Activated T-helper 2 cell treated with anti-CD3 and anti-CD28 coated beads, Interferon-gamma antibody, Interleukin-2, Interleukin-4, amounts not matched to agents 10 μg/mL and 5 μg/mL and 100 μg/mL, durations not matched to agents 14 hours and 24 hours and 36 hours (primary cell): ENCODE measurements at regions of chr1 and their contacts with region 1.

Region 1: GRCh38 chr1:53326088-53326597 is 1.7 kb downstream of the LRP8 start:
- DNase-seq: peak; percentile 94
- H3K4me3 Mint-ChIP-seq: peak overlapping the region; percentile 96
- H3K27ac Mint-ChIP-seq: peak overlapping the region; percentile 93
- H3K4me1 Mint-ChIP-seq: peaks cover 30% of the 10 kb centered on the region
- H3K27me3 Mint-ChIP-seq: no peaks in the 10 kb centered on the region

Region 2: GRCh38 chr1:53238197-53239155 is 87.7 kb before region 1 on chr1 and contains the start of gene MAGOH:
- intact Hi-C with region 1: loop called (anchors 2 kb)
- DNase-seq: peak; percentile 94
- H3K4me3 Mint-ChIP-seq: peak within 1 kb of the TSS; percentile 97
- H3K27ac Mint-ChIP-seq: peak within 1 kb of the TSS; percentile 93
- H3K4me1 Mint-ChIP-seq: peaks cover 19% of the 10 kb centered on the region
- H3K27me3 Mint-ChIP-seq: no peaks in the 10 kb centered on the region
- total RNA-seq, gene MAGOH: 89.0 and 90.2 TPM in 2 replicates

Region 3: GRCh38 chr1:53294567-53294966 is 31.6 kb before region 1 on chr1:
- intact Hi-C with region 1: loop called (anchors 2 kb)
- DNase-seq: peak; percentile 16
- H3K4me3 Mint-ChIP-seq: no peak overlapping the region
- H3K27ac Mint-ChIP-seq: peak overlapping the region; percentile 43
- H3K4me1 Mint-ChIP-seq: peaks cover 42% of the 10 kb centered on the region
- H3K27me3 Mint-ChIP-seq: no peaks in the 10 kb centered on the region

Region 4: GRCh38 chr1:53413175-53414001 is 87.2 kb after region 1 on chr1:
- intact Hi-C with region 1: loop called (anchors 1 kb)
- DNase-seq: peak; percentile 69
- H3K4me3 Mint-ChIP-seq: peak overlapping the region; percentile 64
- H3K27ac Mint-ChIP-seq: peak overlapping the region; percentile 96
- H3K4me1 Mint-ChIP-seq: peaks cover 75% of the 10 kb centered on the region
- H3K27me3 Mint-ChIP-seq: no peaks in the 10 kb centered on the region

Region 5: DNA sequence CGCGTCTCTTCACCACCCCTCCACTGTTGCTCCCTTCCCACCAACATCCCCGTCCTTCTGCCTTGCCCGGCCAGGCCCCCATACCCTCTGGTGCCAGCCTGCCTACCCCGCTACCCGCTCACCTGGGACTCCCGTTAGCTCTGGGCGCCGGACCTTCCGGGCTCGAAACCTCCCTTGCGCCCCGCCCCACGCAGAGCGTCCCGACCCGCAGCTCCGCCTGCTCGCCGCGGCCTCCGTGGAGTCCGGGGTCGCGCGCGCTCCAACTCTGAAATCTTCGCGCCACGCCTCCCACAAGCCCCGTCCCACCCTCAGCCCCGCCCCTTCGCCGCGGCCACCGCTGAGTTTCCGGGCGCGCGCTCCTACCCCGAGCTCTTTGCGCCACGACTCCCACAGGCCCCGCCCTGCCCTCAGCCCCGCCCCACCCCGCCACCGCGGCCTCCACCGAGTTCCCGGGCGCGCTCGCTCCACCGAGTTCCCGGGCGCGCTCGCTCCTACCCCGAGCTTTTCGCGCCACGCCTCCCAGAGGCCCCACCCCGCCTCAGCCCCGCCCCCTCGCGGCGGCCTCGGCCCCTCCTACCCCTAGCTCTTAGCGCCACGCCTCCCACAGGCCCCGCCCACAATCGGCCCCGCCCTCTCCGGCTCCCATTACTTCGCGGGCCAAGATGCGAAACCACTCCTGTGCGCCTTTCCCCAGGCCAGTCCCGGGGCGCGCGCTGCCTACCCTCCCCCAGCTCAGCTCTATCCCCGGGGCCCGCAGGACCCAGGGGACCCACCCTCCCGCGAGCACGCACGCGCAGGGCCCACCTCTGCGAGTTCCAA is 619.5 kb after region 1 on chr1 and contains the start of gene IFT25:
- intact Hi-C with region 1: loop called (anchors 5 kb)
- DNase-seq: peak; percentile 96
- H3K4me3 Mint-ChIP-seq: peak within 1 kb of the TSS; percentile 92
- H3K27ac Mint-ChIP-seq: peak within 1 kb of the TSS; percentile 87
- H3K4me1 Mint-ChIP-seq: peaks cover 46% of the 10 kb centered on the region
- H3K27me3 Mint-ChIP-seq: no peaks in the 10 kb centered on the region
- total RNA-seq, gene IFT25: 52.9 and 54.3 TPM in 2 replicates